Left ventricle myocardium inferior (tissue), 1 donor: ENCODE measurements at regions of chr9 and their contacts with region 1.

Region 1: DNA sequence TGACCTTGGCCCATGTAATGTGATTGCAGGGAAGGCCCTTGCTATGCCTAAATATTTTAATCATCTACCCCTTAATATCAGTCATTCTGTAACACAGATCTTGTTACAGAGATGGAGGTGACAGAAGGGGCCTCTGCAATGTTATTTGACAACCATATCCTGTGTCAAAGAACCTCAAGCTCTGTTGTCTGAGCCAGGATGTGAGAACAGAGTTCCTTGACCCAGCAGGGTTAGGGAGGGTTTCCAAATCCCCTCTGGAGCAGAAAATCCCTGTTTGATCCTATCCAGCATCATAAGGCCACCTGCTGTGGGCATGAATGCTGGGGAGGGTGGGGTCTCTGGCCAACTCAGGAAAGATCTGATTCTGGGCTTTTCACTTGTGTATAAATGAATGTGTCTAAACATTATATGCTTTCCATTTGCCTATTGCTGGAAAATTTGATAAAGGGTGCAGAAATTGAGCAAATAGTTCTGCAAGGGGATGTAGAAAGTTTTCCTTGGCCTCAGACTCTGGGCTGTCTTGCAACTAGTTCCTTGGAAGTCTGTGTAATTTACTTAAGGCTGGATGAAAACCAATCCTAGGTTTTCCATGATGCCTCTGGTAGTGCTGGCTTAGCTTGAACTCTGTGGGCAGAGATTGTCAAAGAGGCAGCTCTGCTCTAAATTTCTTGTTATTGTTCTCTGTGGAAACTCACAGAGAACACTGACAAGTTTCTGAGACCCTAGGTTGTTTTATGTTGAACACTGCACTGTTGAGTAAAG is 71.0 kb downstream of the PGM5 start:
- DNase-seq: no peak
- H3K4me3 ChIP-seq: no peak overlapping the region
- H3K27ac ChIP-seq: peak overlapping the region; percentile 43
- H3K4me1 ChIP-seq: peaks cover 31% of the 10 kb centered on the region
- H3K27me3 ChIP-seq: no peaks in the 10 kb centered on the region
- CTCF ChIP-seq: no peak

Region 2: GRCh38 chr9:68507130-68507805 is 79.9 kb after region 1 on chr9:
- intact Hi-C with region 1: loop called (anchors 10 kb)
- DNase-seq: no peak
- H3K4me3 ChIP-seq: no peak overlapping the region
- H3K27ac ChIP-seq: peak overlapping the region; percentile 86
- H3K4me1 ChIP-seq: peaks cover 57% of the 10 kb centered on the region
- H3K27me3 ChIP-seq: no peaks in the 10 kb centered on the region
- CTCF ChIP-seq: peak; percentile 81